Activated CD4-positive, alpha-beta memory T cell treated with anti-CD3 and anti-CD28 coated beads for 36 hours (primary cell): ENCODE measurements at regions of chr16 and their contacts with region 1.

Region 1: DNA sequence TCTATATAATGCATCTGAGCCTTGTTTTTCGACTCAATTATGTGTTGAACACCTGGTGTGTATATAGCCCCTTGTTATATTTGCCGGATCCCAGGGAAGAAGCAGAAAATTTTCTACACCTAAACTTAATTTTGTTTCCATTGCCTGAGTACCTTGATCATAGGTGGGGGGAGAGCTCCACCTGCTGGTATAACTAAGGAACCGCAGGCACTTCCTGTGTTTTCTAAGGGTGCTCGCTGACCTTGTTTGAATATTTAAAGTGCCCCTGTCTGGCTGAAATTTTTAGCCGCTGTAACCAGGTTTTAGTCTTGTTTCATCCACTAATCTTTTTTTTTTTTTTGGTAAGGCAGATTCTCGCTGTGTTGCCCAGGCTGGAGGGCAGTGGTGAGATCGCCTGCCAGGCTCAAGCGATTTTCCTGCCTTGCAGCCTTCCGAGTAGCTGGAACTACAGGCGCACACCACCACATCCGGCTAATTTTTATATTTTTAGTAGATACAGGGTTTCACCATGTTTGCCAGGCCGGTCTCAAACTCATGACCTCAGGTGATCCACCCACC is 6.5 kb upstream of the NUBP1 start:
- DNase-seq: peak; percentile 78
- H3K4me3 Mint-ChIP-seq: peak overlapping the region; percentile 46
- H3K27ac Mint-ChIP-seq: peak overlapping the region; percentile 38
- H3K4me1 Mint-ChIP-seq: peaks cover 26% of the 10 kb centered on the region
- H3K27me3 Mint-ChIP-seq: no peaks in the 10 kb centered on the region

Region 2: DNA sequence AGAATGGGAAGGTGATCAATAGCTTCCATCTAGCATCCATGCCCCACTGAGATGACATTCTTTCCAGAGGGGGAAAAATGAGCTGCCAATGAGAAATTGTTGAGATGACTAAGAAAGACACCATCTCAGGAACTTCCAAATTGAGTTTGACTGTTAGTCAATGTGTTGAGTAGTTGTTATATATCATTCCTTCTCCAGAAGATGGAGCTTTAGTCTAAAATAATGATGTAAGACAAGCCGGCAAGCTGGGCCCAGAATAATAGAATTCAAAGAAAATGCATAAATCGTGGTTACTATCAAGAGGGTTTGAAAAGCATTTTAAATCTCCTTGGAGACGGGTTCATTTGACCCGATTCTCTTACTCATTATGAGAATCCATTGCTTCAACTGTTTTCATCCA is 422.3 kb before region 1 on chr16:
- CTCF ChIA-PET with region 1: interaction called, 6 read pairs
- POLR2A ChIA-PET with region 1: no interaction called
- intact Hi-C with region 1: loop called (anchors 2 kb)
- DNase-seq: no peak
- H3K4me3 Mint-ChIP-seq: no peak overlapping the region
- H3K27ac Mint-ChIP-seq: no peak overlapping the region
- H3K4me1 Mint-ChIP-seq: peaks cover 10% of the 10 kb centered on the region
- H3K27me3 Mint-ChIP-seq: no peaks in the 10 kb centered on the region

Region 3: GRCh38 chr16:10521681-10522274 is 215.4 kb before region 1 on chr16:
- CTCF ChIA-PET with region 1: interaction called, 134 read pairs
- POLR2A ChIA-PET with region 1: no interaction called
- intact Hi-C with region 1: no loop called
- DNase-seq: peak; percentile 55
- H3K4me3 Mint-ChIP-seq: no peak overlapping the region
- H3K27ac Mint-ChIP-seq: no peak overlapping the region
- H3K4me1 Mint-ChIP-seq: no peaks in the 10 kb centered on the region
- H3K27me3 Mint-ChIP-seq: no peaks in the 10 kb centered on the region